GM18951 (cell line): ENCODE measurements at regions of chr10 and their contacts with region 1.

Region 1: DNA sequence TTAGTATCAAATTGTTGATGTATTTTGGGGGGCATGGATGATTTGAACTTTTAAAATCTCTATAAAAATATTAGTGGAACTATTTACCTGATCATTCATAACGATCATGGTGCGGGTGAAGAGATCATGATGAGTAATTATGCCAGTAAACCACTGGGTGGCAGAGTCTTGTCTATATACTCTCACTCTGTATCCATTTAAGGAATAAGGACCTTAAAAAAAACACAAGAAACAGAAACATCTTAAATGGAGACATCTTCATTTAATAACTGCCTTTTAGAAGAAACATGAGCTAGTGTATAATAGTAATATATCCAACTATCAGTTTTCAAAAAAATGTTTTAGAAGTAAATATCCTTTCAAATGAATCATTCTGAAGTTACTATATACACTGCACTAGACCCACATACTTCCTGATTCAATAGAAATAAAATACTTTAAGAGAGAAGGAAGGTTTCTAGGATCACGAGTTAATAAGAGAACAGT is 84.0 kb downstream of the NRBF2 start:
- POLR2A ChIP-seq: no peak

Region 2: DNA sequence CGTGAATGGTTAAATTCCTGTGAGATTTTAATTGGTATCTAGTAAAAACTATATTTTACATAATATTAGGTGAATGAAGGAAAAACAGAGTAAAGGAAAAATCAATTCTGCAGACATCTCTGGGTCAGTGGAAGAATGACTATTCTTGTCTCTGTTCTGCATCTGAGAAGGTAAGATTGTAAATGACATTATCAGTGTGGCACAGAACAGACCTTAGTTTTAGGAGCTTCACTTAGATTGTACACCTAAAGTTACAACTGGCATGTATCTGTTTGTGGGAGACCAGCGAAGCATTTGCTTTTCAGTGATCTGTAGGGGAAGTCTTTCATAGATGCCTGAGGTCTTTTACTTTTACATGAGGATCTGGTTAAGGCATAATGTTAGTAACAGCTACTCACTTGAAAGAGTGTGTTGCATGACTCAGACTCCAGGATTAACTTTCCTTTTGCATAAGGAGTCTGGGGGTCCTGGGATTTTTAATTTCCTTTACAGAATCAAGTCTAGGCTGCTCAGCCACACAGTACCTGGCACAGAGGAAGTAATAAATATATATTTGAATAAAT is 192.4 kb after region 1 on chr10:
- in situ Hi-C with region 1: no loop called
- POLR2A ChIP-seq: no peak

Region 3: GRCh38 chr10:63603709-63604445 is 386.7 kb after region 1 on chr10:
- in situ Hi-C with region 1: loop called (anchors 25 kb)
- POLR2A ChIP-seq: no peak